ENCODE measurements at regions of chr5 and their contacts with region 1.

Region 1: GRCh38 chr5:178859625-178860531 is at the start of gene ZNF354B:
- DNase-seq: peak; percentile 62 to 89 (median 81)
- H3K4me3 ChIP-seq: peak within 1 kb of the TSS; percentile 69
- H3K4me3 Mint-ChIP-seq: peak within 1 kb of the TSS; percentile 81 to 96 (median 91)
- H3K27ac ChIP-seq: peak within 1 kb of the TSS; percentile 31
- H3K27ac Mint-ChIP-seq: peak within 1 kb of the TSS; percentile 16 to 98 (median 89)
- H3K4me1 ChIP-seq: peaks cover 16% of the 10 kb centered on the region
- H3K4me1 Mint-ChIP-seq: peaks cover 28 to 38% (median 35%) of the 10 kb centered on the region in 3 donors
- H3K27me3 ChIP-seq: no peaks in the 10 kb centered on the region
- H3K27me3 Mint-ChIP-seq: peaks cover 2 to 4% of the 10 kb centered on the region in 2 donors
- total RNA-seq, gene ZNF354B: 10.5 to 11.5 TPM

Region 2: GRCh38 chr5:178958774-178959173 is 98.9 kb after region 1 on chr5:
- CTCF ChIA-PET with region 1: no interaction called
- POLR2A ChIA-PET with region 1: no interaction called
- DNase-seq: no peak
- H3K4me3 ChIP-seq: no peak overlapping the region
- H3K4me3 Mint-ChIP-seq: no peak overlapping the region
- H3K27ac ChIP-seq: no peak overlapping the region
- H3K27ac Mint-ChIP-seq: no peak overlapping the region
- H3K4me1 ChIP-seq: no peaks in the 10 kb centered on the region
- H3K4me1 Mint-ChIP-seq: no peaks in the 10 kb centered on the region
- H3K27me3 ChIP-seq: no peaks in the 10 kb centered on the region
- H3K27me3 Mint-ChIP-seq: peaks cover 0 to 14% of the 10 kb centered on the region in 2 donors

Region 3: GRCh38 chr5:179008661-179009060 is 148.8 kb after region 1 on chr5:
- CTCF ChIA-PET with region 1: no interaction called
- POLR2A ChIA-PET with region 1: no interaction called
- DNase-seq: no peak
- H3K4me3 ChIP-seq: no peak overlapping the region
- H3K4me3 Mint-ChIP-seq: no peak overlapping the region
- H3K27ac ChIP-seq: no peak overlapping the region
- H3K27ac Mint-ChIP-seq: no peak overlapping the region
- H3K4me1 ChIP-seq: no peaks in the 10 kb centered on the region
- H3K4me1 Mint-ChIP-seq: no peaks in the 10 kb centered on the region
- H3K27me3 ChIP-seq: no peaks in the 10 kb centered on the region
- H3K27me3 Mint-ChIP-seq: peaks cover 2 to 28% of the 10 kb centered on the region in 2 donors

Region 4: GRCh38 chr5:179060116-179061008 is 200.5 kb after region 1 on chr5 and contains the start of gene ZNF354C:
- CTCF ChIA-PET with region 1: interaction called, 5 read pairs
- POLR2A ChIA-PET with region 1: interaction called, 12 read pairs
- DNase-seq: peak; percentile 73 to 89 (median 83)
- H3K4me3 ChIP-seq: peak within 1 kb of the TSS; percentile 76
- H3K4me3 Mint-ChIP-seq: peak within 1 kb of the TSS; percentile 91 to 98 (median 97)
- H3K27ac ChIP-seq: peak within 1 kb of the TSS; percentile 45
- H3K27ac Mint-ChIP-seq: peak within 1 kb of the TSS; percentile 62 to 96 (median 91)
- H3K4me1 ChIP-seq: peaks cover 20% of the 10 kb centered on the region
- H3K4me1 Mint-ChIP-seq: peaks cover 32 to 40% (median 37%) of the 10 kb centered on the region in 3 donors
- H3K27me3 ChIP-seq: no peaks in the 10 kb centered on the region
- H3K27me3 Mint-ChIP-seq: peaks cover 4 to 14% of the 10 kb centered on the region in 2 donors
- total RNA-seq, gene ZNF354C: 5.7 to 6.0 TPM

Region 5: DNA sequence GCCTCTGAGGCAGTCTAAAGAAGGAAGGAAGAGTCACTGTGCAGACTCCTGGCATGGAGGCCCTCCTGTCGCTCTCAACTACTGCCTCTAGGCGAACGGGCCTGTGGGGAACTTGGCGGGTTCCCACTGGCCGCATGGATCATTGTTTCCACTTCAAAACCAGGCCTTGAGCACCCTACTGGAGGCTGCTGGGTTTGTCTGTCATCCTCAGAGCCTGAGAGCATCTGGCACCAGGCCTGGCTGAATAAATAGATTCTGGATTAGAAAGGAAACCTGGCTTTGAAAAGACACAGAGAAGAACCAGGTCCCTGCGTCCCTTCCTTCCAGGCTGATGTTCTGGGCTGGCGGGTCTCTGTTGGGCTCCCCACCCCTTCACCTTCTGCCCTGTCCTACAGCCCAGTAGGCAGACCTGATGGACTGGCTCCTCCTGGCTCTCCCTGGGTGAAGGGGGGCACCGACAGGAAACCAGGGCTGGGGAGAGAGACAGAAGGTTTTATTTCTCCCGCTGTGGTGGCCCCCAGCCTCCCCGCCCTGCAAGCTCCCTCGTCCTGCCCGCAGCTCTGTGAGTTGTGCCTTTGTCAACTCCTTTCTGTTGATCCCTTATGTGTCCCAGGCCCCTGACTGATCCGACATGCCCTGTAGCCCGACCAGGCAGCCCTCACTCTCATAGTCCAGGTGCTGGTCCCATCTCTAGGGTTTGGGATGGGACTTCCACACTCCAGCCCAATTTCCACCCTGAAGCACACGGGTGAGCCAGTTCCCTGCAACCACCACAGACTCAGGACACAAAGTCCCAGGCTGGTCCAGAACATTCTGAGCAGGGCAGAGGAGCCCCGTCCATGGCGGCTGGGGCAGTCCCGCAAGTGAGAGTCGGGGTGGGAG is 435.3 kb after region 1 on chr5:
- CTCF ChIA-PET with region 1: no interaction called
- POLR2A ChIA-PET with region 1: no interaction called
- DNase-seq: peak in 1 of 5 donors; percentile 38
- H3K4me3 ChIP-seq: no peak overlapping the region
- H3K4me3 Mint-ChIP-seq: no peak overlapping the region
- H3K27ac ChIP-seq: no peak overlapping the region
- H3K27ac Mint-ChIP-seq: peak overlapping the region in 1 of 8 donors; percentile 68
- H3K4me1 ChIP-seq: no peaks in the 10 kb centered on the region
- H3K4me1 Mint-ChIP-seq: no peaks in the 10 kb centered on the region
- H3K27me3 ChIP-seq: no peaks in the 10 kb centered on the region
- H3K27me3 Mint-ChIP-seq: no peaks in the 10 kb centered on the region

Measured in CD8-positive, alpha-beta memory T cell (primary cell).